ENCODE measurements at regions of chr1 and their contacts with region 1.

Region 1: DNA sequence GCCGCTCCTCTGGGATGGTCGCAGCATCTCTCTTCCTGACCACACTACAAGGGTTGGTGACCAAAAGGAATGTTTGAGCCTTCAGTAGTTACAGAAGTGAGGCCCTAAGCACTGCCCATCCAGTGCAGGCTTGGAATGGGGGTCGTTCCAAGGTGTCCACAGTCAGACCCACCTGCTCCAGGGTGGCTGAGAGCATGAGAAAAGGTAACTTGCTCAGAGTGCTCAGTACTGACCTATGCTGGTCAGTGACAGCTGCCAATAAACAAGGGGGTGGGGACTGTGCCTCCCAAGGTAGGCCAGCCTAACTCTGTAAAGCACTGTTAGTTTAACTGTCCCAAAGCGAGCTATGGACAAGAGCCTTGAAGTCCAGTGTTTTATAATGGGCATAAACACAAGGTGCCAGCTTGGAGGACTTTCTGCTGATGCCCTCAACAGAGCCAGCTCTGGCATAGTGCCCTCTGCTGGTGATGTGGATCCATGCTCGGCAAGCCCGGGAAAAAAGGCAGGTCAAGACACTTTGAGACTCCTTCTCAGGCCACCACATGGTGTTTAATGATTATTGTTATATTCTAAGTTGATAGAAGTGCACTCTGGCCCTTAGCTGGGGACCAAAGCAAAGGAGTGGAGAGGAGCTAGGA is 78.1 kb upstream of the DNAH14 start:
- DNase-seq: peak; percentile 64
- CTCF ChIP-seq: peak; percentile 84

Region 2: GRCh38 chr1:224513787-224514209 is 337.5 kb before region 1 on chr1:
- in situ Hi-C with region 1: loop called (anchors 10 kb)
- DNase-seq: peak; percentile 86
- CTCF ChIP-seq: peak; percentile 94

Region 3: GRCh38 chr1:224939844-224940425 is 88.6 kb after region 1 on chr1:
- in situ Hi-C with region 1: no loop called
- DNase-seq: no peak
- CTCF ChIP-seq: no peak